GM12878 (cell line): ENCODE measurements at regions of chr3 and their contacts with region 1.

Region 1: GRCh38 chr3:99884484-99884883 is 66.8 kb downstream of the CMSS1 start:
- DNase-seq: no peak
- ATAC-seq: no peak
- H3K4me3 ChIP-seq: no peak overlapping the region
- H3K27ac ChIP-seq: no peak overlapping the region
- H3K4me1 ChIP-seq: no peaks in the 10 kb centered on the region; the same call in 1 of the 2 replicates
- H3K27me3 ChIP-seq: no peaks in the 10 kb centered on the region
- CTCF ChIP-seq: no peak
- EP300 ChIP-seq: no peak
- POLR2A ChIP-seq: no peak
- RAD21 ChIP-seq: no peak

Region 2: GRCh38 chr3:99895703-99896441 is 11.4 kb after region 1 on chr3:
- CTCF ChIA-PET with region 1: interaction called, 5 read pairs
- POLR2A ChIA-PET with region 1: interaction called, 4 read pairs
- RAD21 ChIA-PET with region 1: interaction called, 3 read pairs
- SMC1A ChIA-PET with region 1: interaction called, 15 read pairs
- in situ Hi-C with region 1: no loop called
- intact Hi-C with region 1: no loop called
- DNase-seq: no peak
- ATAC-seq: peak; percentile 28
- H3K4me3 ChIP-seq: no peak overlapping the region
- H3K27ac ChIP-seq: no peak overlapping the region
- H3K4me1 ChIP-seq: no peaks in the 10 kb centered on the region
- H3K27me3 ChIP-seq: no peaks in the 10 kb centered on the region
- CTCF ChIP-seq: no peak
- EP300 ChIP-seq: no peak
- POLR2A ChIP-seq: no peak
- RAD21 ChIP-seq: no peak